ENCODE measurements at regions of chr13 and their contacts with region 1.

Region 1: GRCh38 chr13:96615252-96615651 is 379.0 kb downstream of the OXGR1 start:
- DNase-seq: no peak
- ATAC-seq: no peak
- H3K4me3 ChIP-seq: no peak overlapping the region
- H3K27ac ChIP-seq: no peak overlapping the region
- H3K4me1 ChIP-seq: no peaks in the 10 kb centered on the region
- H3K27me3 ChIP-seq: no peaks in the 10 kb centered on the region
- CTCF ChIP-seq: no peak

Region 2: GRCh38 chr13:96652506-96652905 is 37.3 kb after region 1 on chr13:
- CTCF ChIA-PET with region 1: no interaction called
- POLR2A ChIA-PET with region 1: no interaction called
- intact Hi-C with region 1: no loop called
- DNase-seq: no peak
- ATAC-seq: no peak
- H3K4me3 ChIP-seq: no peak overlapping the region
- H3K27ac ChIP-seq: no peak overlapping the region
- H3K4me1 ChIP-seq: peaks cover 16% of the 10 kb centered on the region
- H3K27me3 ChIP-seq: no peaks in the 10 kb centered on the region
- CTCF ChIP-seq: no peak

Region 3: DNA sequence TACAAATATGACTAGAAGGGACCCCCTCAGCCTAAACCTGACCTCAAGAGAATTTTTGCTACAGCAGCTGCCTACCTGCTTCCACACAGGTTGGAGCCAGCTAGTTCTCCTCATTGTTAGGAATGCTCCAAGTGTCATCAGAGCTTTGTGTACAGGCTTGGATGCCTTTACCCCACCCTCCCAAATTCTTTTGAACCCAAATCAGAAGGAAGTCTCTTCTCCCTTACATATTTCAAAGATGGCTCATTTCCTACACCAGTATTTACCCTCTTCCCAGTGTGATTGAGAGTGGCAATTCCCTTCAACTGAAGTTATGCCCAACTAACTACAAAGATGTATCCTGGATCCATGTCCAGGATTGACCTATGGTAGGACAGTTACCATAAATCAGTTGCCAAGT is 55.8 kb after region 1 on chr13:
- CTCF ChIA-PET with region 1: interaction called, 16 read pairs
- POLR2A ChIA-PET with region 1: no interaction called
- intact Hi-C with region 1: no loop called
- DNase-seq: peak; percentile 72
- ATAC-seq: peak; percentile 47
- H3K4me3 ChIP-seq: no peak overlapping the region
- H3K27ac ChIP-seq: peak overlapping the region; percentile 82
- H3K4me1 ChIP-seq: peaks cover 31% of the 10 kb centered on the region
- H3K27me3 ChIP-seq: no peaks in the 10 kb centered on the region
- CTCF ChIP-seq: no peak

Region 4: DNA sequence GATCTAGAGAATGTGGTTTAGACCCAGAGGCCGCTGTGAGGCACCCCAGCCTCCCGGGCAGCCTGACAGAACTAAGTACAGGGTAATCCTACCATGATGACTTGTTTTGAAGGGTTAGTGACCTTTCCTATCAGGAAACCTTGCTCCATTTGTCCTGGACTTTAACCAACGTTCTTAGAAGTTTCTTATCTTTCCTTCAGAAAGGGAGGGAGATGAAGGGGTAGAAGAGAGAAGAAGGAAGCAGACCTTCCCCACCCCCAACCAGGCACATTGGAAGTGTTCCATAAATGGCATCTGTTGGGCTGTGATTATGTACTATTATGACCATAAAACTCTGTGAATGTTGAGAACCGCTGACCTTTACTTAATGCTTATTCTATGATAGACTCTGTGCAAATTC is 194.9 kb after region 1 on chr13:
- CTCF ChIA-PET with region 1: no interaction called
- POLR2A ChIA-PET with region 1: no interaction called
- intact Hi-C with region 1: no loop called
- DNase-seq: no peak
- ATAC-seq: no peak
- H3K4me3 ChIP-seq: no peak overlapping the region
- H3K27ac ChIP-seq: no peak overlapping the region
- H3K4me1 ChIP-seq: no peaks in the 10 kb centered on the region
- H3K27me3 ChIP-seq: no peaks in the 10 kb centered on the region
- CTCF ChIP-seq: no peak